HEK293 (cell line): ENCODE measurements at regions of chr19 and their contacts with region 1.

Region 1: GRCh38 chr19:2151339-2152229 is at the start of gene AP3D1:
- H3K4me3 ChIP-seq: peak within 1 kb of the TSS; percentile 79
- H3K27ac ChIP-seq: peak within 1 kb of the TSS; percentile 91
- H3K4me1 ChIP-seq: peaks cover 6% of the 10 kb centered on the region
- CTCF ChIP-seq: no peak

Region 2: GRCh38 chr19:2189880-2190279 is 38.3 kb after region 1 on chr19:
- CTCF ChIA-PET with region 1: no interaction called
- POLR2A ChIA-PET with region 1: no interaction called
- H3K4me3 ChIP-seq: no peak overlapping the region
- H3K27ac ChIP-seq: no peak overlapping the region
- H3K4me1 ChIP-seq: no peaks in the 10 kb centered on the region
- CTCF ChIP-seq: no peak

Region 3: GRCh38 chr19:2221918-2222317 is 70.3 kb after region 1 on chr19:
- CTCF ChIA-PET with region 1: interaction called, 13 read pairs
- POLR2A ChIA-PET with region 1: interaction called, 4 read pairs
- H3K4me3 ChIP-seq: no peak overlapping the region
- H3K27ac ChIP-seq: no peak overlapping the region
- H3K4me1 ChIP-seq: no peaks in the 10 kb centered on the region
- CTCF ChIP-seq: no peak